ENCODE measurements at regions of chr17 and their contacts with region 1.

Region 1: GRCh38 chr17:33674685-33675084 is 381.6 kb upstream of the ASIC2 start:
- DNase-seq: peak; percentile 17 to 85
- H3K4me3 ChIP-seq: no peak overlapping the region
- H3K27ac ChIP-seq: no peak overlapping the region
- H3K4me1 ChIP-seq: no peaks in the 10 kb centered on the region
- H3K27me3 ChIP-seq: no peaks in the 10 kb centered on the region
- CTCF ChIP-seq: peak; percentile 48 to 78 (median 70)
- EP300 ChIP-seq: no peak
- POLR2A ChIP-seq: no peak
- RAD21 ChIP-seq: peak; percentile 70 to 73

Region 2: GRCh38 chr17:33642002-33642401 is 32.7 kb before region 1 on chr17:
- CTCF ChIA-PET with region 1: interaction called, 47 read pairs
- POLR2A ChIA-PET with region 1: no interaction called
- DNase-seq: no peak
- H3K4me3 ChIP-seq: no peak overlapping the region
- H3K27ac ChIP-seq: no peak overlapping the region
- H3K4me1 ChIP-seq: peaks cover 6 to 21% (median 10%) of the 10 kb centered on the region in 4 experiments; a peak in 4 of 7 replicates
- H3K27me3 ChIP-seq: no peaks in the 10 kb centered on the region
- CTCF ChIP-seq: peak; percentile 20 to 45 (median 32); a peak in 3 of 4 replicates
- EP300 ChIP-seq: no peak
- POLR2A ChIP-seq: no peak
- RAD21 ChIP-seq: peak in 1 of 2 experiments; percentile 22; a peak in 1 of 4 replicates

Region 3: DNA sequence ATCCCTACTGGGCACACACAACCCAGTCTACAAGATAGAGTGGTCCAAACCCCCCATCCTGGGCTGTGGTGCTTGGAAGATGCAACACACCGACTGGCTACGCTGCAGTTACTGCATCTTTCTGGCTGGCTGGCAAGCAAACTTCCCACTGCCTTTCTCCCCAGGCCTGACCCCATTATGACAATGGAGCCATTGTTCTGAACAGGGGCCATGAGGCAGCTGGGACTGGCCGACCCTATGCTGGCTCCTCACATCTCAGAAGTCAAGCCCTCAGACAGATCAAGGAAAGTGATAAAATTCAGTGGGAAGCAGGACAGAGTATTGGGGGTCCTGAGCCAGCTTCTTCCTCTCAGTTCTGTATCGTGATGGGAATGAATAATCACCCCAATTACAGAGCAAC is 17.5 kb before region 1 on chr17:
- CTCF ChIA-PET with region 1: interaction called, 47 read pairs
- POLR2A ChIA-PET with region 1: no interaction called
- DNase-seq: no peak
- H3K4me3 ChIP-seq: no peak overlapping the region
- H3K27ac ChIP-seq: no peak overlapping the region
- H3K4me1 ChIP-seq: peaks cover 0 to 2% (median 0%) of the 10 kb centered on the region in 4 experiments; a peak in 1 of 7 replicates
- H3K27me3 ChIP-seq: peaks cover 0 to 2% (median 0%) of the 10 kb centered on the region in 4 experiments; a peak in 1 of 7 replicates
- CTCF ChIP-seq: no peak
- EP300 ChIP-seq: no peak
- POLR2A ChIP-seq: no peak
- RAD21 ChIP-seq: no peak

Region 4: DNA sequence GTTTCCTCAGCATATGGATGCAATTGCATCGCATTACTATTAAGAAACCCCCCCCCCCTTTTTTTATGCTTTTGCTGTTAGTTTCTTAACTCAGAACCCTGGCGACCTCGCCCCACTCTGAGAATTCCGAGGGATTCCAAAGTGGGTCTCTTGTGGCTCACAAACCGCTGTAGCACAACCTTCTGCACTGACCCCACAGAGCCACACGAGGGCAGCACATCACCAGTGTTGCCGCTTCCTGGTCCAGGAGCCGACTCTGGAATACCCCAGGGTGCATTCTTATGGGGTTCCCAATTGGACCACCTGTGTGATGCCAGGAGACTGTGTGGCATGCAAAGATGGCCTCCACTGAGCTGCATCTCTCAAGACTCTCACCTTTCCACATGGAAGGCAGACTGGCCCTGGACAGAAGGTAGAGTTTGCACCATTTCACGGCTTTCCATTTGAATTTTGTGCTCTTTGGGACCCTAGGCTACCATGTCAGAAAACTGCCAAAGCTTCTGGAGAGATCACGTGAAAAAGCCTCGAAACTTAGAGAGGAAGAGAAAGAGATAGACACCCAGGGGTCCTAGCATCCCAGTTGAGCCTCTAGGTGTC is 51.1 kb after region 1 on chr17:
- CTCF ChIA-PET with region 1: interaction called, 10 read pairs
- POLR2A ChIA-PET with region 1: no interaction called
- DNase-seq: peak; percentile 36 to 88
- H3K4me3 ChIP-seq: no peak overlapping the region
- H3K27ac ChIP-seq: no peak overlapping the region
- H3K4me1 ChIP-seq: no peaks in the 10 kb centered on the region
- H3K27me3 ChIP-seq: no peaks in the 10 kb centered on the region; a peak in 1 of 7 replicates
- CTCF ChIP-seq: peak; percentile 83 to 96 (median 91)
- EP300 ChIP-seq: no peak
- POLR2A ChIP-seq: no peak
- RAD21 ChIP-seq: peak; percentile 94 to 97

Region 5: GRCh38 chr17:33769066-33769465 is 94.4 kb after region 1 on chr17:
- CTCF ChIA-PET with region 1: no interaction called
- POLR2A ChIA-PET with region 1: no interaction called
- DNase-seq: no peak
- H3K4me3 ChIP-seq: no peak overlapping the region
- H3K27ac ChIP-seq: no peak overlapping the region
- H3K4me1 ChIP-seq: peaks cover 0 to 4% (median 0%) of the 10 kb centered on the region in 4 experiments; a peak in 1 of 7 replicates
- H3K27me3 ChIP-seq: no peaks in the 10 kb centered on the region
- CTCF ChIP-seq: no peak
- EP300 ChIP-seq: no peak
- POLR2A ChIP-seq: no peak
- RAD21 ChIP-seq: no peak